ENCODE measurements at regions of chr20 and their contacts with region 1.

Region 1: DNA sequence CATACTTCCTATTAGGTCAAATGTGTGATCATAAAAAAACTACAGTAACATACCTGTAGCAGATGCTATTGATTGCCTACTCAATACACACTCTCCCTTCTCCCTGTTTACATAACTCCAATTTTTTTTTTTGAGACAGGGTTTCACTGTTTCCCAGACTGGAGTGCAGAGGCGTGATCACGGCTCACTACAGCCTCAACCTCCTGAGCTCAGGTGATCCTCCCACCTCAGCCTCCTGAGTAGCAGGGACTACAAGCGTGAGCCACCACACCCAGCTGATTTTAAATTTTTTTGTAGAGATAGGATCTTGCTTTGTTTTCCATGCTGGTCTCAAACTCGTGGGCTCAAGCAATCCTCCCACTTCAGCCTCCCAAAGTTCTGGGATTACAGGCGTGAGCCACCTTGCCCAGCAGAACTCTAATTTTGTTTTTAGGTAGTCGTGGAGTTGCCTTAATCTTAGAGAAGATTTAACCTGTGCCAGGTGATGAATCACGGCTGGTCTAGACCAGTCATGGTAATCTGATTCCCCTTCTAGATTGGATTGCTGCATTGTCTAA is 14.0 kb upstream of the KIF3B start:
- DNase-seq: no peak
- H3K4me3 ChIP-seq: no peak overlapping the region
- H3K27ac ChIP-seq: no peak overlapping the region
- H3K4me1 ChIP-seq: no peaks in the 10 kb centered on the region
- H3K27me3 ChIP-seq: no peaks in the 10 kb centered on the region
- CTCF ChIP-seq: no peak
- POLR2A ChIP-seq: no peak

Region 2: GRCh38 chr20:32149596-32150170 is 113.8 kb before region 1 on chr20:
- intact Hi-C with region 1: no loop called
- DNase-seq: no peak
- H3K4me3 ChIP-seq: no peak overlapping the region
- H3K27ac ChIP-seq: no peak overlapping the region
- H3K4me1 ChIP-seq: no peaks in the 10 kb centered on the region
- H3K27me3 ChIP-seq: no peaks in the 10 kb centered on the region
- CTCF ChIP-seq: no peak
- POLR2A ChIP-seq: no peak

Region 3: DNA sequence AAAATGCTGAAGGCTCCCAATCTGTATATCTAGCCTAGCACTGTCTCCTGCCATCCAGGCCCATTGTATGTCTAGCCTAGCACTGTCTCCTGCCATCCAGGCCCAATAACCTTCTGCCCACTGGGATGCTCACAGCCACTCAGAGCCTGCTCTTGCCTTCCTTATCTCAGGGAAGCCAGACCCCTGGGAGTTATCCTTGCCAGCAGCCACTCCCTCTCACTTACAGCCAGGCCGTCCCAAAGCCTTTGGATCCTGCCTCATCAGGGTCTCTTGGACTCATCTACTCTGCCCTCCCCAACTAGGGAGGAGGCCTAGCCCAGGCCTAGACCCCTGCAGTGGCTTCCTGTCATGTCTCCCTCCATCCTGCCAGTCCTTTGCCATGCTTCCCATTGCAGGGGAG is 51.3 kb after region 1 on chr20:
- intact Hi-C with region 1: loop called (anchors 2 kb)
- DNase-seq: no peak
- H3K4me3 ChIP-seq: no peak overlapping the region
- H3K27ac ChIP-seq: no peak overlapping the region
- H3K4me1 ChIP-seq: no peaks in the 10 kb centered on the region
- H3K27me3 ChIP-seq: no peaks in the 10 kb centered on the region
- CTCF ChIP-seq: no peak
- POLR2A ChIP-seq: no peak